Activated CD4-positive, alpha-beta memory T cell treated with anti-CD3 and anti-CD28 coated beads, Interleukin-2, amount 10 ng/mL, durations not matched to agents 7 days and 5 days (primary cell): ENCODE measurements at regions of chr16 and their contacts with region 1.

Region 1: DNA sequence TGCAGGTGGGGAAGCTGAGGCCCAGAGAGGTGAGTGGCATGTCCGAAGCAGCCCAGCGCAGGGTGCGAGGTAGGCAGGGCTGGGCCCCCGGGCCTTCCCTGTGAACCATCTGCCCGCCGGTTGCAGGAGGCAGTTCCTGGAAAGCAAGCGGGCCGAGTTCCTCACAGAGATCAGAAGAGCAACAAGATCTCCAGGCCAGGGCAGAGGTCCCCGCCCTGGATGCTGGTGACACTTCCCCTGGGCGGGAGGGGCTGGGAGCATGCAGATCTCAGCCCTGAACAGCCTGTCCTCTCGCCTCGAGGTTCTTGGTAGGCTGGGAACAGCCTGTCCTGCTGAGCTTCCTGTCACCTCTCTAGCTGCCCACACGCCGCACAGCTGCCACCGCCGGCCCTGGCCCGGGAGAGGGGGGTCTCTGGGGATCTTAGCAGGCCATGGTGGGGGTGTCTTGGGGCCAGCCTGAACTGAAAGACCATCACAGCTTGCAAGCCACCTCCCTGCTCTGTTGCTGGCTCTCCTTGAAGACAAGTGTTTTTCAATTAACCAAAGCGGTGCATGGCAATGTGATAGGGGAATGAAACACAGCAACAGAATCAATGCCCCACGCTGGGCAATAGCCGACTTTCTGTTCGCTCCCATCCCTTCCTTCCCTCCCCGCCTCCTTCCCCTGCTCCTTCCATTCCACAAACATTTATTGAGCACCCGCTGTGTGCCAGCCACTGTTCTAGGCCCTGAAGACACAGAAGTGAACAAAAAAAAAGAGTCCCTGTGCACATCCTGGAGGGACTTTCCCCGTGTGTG is 31.7 kb downstream of the SOCS1 start:
- DNase-seq: peak; percentile 85
- H3K4me3 Mint-ChIP-seq: peak overlapping the region; percentile 68
- H3K27ac Mint-ChIP-seq: peak overlapping the region; percentile 99
- H3K4me1 Mint-ChIP-seq: peaks cover 67% of the 10 kb centered on the region
- H3K27me3 Mint-ChIP-seq: no peaks in the 10 kb centered on the region

Region 2: DNA sequence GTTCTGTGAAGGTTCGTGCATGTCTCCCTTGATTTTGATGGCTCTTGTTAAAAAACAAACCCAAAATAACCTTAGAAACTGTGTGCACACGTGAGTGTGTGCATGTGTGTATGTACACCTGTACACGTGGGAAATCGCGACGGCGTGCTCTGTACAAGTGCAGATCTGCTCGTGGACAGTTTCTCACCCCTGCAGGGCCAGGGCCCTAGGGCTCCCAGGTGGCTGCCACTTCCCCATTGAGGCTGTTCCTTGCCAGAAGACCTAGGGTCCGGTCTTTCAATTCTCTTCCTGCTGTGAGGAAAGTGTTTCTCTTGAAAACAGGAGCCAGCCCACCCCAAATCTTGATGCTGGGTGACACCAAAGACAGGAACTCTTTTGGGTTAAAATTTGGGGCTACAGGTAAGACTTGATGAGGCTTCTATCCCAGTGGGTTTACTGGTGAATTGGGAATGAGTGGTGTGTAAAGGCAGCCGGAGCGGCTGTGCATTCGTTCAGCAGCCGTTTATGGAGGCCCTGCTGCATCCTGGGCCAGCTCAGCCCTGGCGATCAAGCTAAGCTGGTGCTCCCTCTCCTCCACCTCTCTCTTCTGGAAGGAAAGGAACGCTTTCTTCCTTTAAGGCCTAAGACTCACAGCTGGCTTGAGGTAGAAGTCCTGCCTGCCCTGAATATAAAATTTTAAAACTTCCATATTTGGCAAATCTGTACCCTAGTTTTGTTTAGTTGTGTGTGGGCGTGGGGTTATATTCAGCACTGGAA is 142.0 kb before region 1 on chr16:
- CTCF ChIA-PET with region 1: no interaction called
- POLR2A ChIA-PET with region 1: no interaction called
- DNase-seq: no peak
- H3K4me3 Mint-ChIP-seq: no peak overlapping the region
- H3K27ac Mint-ChIP-seq: no peak overlapping the region
- H3K4me1 Mint-ChIP-seq: peaks cover 72% of the 10 kb centered on the region
- H3K27me3 Mint-ChIP-seq: no peaks in the 10 kb centered on the region

Region 3: DNA sequence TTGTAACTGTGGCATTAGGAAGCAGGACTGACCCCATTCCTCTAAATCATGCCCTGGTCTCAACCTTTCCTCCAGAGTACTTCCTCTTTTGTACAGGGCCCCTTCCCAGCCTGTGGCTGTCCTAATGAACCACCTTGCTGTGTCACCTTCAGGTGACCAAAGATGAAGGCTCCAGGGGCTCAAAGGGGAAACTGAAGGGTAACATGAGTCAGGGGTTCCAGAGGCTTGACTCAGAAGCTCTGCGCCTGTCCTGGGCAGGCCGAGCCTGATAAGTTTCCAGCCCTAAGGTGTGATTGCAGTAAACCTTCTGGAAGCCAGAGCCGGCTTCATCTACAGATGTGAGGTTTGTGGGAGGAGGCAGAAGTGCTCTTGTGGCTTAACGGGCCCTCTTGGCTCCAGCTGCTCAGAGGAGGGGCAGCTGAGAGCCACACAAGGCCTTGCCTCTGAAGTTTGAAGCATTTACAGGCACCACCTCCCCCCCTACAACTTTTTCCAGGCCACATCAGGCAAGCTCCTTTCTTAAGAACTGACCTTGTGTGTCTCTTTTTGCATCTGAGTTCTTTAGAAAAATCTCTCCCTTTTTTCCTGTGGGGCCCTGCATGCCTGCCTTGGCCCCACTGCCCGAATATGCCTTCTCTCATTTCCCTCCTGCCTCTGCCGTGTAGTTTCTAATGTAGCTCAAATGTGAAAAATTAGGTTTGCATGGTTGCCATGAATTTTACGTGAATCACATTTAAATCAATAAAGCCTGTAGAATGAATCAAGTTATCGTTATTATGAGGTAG is 130.0 kb before region 1 on chr16:
- CTCF ChIA-PET with region 1: interaction called, 13 read pairs
- POLR2A ChIA-PET with region 1: interaction called, 22 read pairs
- DNase-seq: peak; percentile 72
- H3K4me3 Mint-ChIP-seq: peak overlapping the region; percentile 36
- H3K27ac Mint-ChIP-seq: peak overlapping the region; percentile 93
- H3K4me1 Mint-ChIP-seq: peaks cover 86% of the 10 kb centered on the region
- H3K27me3 Mint-ChIP-seq: no peaks in the 10 kb centered on the region

Region 4: GRCh38 chr16:11161974-11162373 is 62.3 kb before region 1 on chr16:
- CTCF ChIA-PET with region 1: interaction called, 6 read pairs
- POLR2A ChIA-PET with region 1: interaction called, 19 read pairs
- DNase-seq: no peak
- H3K4me3 Mint-ChIP-seq: no peak overlapping the region
- H3K27ac Mint-ChIP-seq: peak overlapping the region; percentile 70
- H3K4me1 Mint-ChIP-seq: peaks cover 88% of the 10 kb centered on the region
- H3K27me3 Mint-ChIP-seq: no peaks in the 10 kb centered on the region

Region 5: DNA sequence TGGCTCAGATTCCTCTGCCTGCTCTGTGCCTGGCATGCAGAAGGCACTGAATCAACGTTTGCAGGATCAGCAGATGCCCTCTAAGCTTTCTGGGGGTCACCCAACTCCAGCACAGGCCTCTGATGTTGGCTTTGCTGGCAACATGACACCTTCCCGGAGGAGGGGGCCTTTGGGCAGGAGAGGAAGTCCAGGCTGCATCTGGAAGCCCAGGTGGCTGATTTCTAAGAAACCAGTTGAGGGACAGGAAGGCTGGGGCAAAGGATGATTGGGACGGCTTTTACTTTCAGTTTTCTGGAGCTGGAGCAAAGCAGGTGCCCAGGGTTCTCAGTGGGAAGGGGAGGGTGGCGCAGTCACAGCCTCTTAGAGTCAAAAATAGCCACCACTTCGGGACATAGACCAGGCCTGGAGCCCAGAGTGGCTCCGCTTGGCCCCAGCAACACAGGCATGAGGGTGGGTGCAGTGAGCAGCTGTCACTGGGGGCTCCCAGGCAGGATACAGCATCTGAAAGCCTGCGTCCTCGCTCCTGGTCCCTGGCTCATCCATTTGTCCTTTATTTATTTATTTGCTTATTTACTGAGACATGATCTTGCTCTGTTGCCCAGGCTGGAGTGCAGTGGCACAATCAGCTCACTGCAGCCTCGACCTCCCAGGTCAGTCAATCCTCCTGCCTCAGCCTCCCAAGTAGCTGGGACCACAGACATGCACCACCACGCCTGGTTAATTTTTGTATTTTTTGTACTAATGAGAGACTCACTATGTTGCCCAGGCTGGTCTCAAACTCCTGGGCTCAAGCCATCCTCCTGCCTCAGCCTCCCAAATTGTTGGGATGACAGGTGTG is 16.6 kb after region 1 on chr16:
- CTCF ChIA-PET with region 1: interaction called, 6 read pairs
- POLR2A ChIA-PET with region 1: interaction called, 69 read pairs
- DNase-seq: peak; percentile 46
- H3K4me3 Mint-ChIP-seq: peak overlapping the region; percentile 38
- H3K27ac Mint-ChIP-seq: no peak overlapping the region
- H3K4me1 Mint-ChIP-seq: peaks cover 29% of the 10 kb centered on the region
- H3K27me3 Mint-ChIP-seq: no peaks in the 10 kb centered on the region

Region 6: DNA sequence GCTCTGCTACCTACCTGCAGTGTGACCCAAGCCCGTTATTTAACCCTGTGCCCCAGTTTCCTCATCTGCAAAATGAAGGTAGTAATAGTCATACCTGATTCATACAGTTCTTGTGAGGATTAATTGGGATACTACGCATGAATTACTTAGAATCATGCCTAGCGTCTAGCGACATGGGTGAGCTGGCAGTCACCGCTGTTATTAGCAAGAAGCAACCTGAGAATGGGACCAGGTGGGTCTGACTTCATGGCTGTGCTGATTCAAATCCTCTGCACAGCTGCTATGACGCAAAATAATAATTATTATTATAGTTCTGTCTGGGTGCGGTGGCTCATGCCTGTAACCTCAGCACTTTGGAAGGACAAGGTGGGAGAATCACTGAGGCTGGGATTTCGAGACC is 23.8 kb after region 1 on chr16:
- CTCF ChIA-PET with region 1: interaction called, 7 read pairs
- POLR2A ChIA-PET with region 1: interaction called, 302 read pairs
- DNase-seq: no peak
- H3K4me3 Mint-ChIP-seq: no peak overlapping the region
- H3K27ac Mint-ChIP-seq: peak overlapping the region; percentile 32
- H3K4me1 Mint-ChIP-seq: peaks cover 69% of the 10 kb centered on the region
- H3K27me3 Mint-ChIP-seq: no peaks in the 10 kb centered on the region

Region 7: DNA sequence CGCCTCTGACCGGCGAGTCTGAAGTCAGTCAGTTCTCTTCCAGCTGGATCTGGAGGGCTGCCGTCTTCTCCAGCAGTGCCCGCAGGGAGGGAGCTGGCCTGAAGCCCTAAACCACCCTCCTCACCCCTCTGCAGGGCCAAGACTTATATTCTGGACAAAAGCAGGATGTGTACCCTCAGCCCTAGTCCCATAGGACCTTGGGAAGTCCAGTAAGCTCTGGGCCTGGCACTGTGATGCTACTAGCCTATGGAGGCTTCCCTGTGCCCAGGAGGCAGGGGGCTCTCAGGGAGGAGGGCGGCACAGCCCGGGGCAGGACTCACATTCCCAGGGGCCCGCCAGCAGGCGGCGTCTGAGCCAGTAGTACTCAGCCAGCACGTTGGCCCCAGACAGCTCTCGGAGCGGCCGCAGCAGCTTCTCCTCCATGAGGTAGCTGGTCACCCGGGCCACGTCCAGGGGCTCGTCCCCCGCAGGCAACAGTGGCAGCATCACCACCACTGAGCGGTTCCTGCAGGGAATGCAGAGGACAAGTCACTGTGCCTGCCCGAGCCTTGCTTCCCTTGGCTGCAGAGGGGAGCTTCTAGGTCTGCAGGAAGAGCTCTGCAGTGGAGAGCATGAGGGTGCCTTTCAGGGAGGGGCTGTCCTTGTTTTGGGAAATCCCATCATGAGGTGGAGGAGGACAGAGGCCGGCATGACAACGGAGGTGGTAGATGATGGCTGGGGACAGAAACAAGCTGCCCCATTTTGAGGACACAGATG is 162.7 kb after region 1 on chr16:
- CTCF ChIA-PET with region 1: no interaction called
- POLR2A ChIA-PET with region 1: no interaction called
- DNase-seq: no peak
- H3K4me3 Mint-ChIP-seq: no peak overlapping the region
- H3K27ac Mint-ChIP-seq: no peak overlapping the region
- H3K4me1 Mint-ChIP-seq: peaks cover 18% of the 10 kb centered on the region
- H3K27me3 Mint-ChIP-seq: peaks cover 2% of the 10 kb centered on the region

Region 8: GRCh38 chr16:11452746-11453389 is 228.6 kb after region 1 on chr16:
- CTCF ChIA-PET with region 1: no interaction called
- POLR2A ChIA-PET with region 1: no interaction called
- DNase-seq: no peak
- H3K4me3 Mint-ChIP-seq: no peak overlapping the region
- H3K27ac Mint-ChIP-seq: no peak overlapping the region
- H3K4me1 Mint-ChIP-seq: no peaks in the 10 kb centered on the region
- H3K27me3 Mint-ChIP-seq: peaks cover 8% of the 10 kb centered on the region